ENCODE measurements at regions of chr1 and their contacts with region 1.

Region 1: DNA sequence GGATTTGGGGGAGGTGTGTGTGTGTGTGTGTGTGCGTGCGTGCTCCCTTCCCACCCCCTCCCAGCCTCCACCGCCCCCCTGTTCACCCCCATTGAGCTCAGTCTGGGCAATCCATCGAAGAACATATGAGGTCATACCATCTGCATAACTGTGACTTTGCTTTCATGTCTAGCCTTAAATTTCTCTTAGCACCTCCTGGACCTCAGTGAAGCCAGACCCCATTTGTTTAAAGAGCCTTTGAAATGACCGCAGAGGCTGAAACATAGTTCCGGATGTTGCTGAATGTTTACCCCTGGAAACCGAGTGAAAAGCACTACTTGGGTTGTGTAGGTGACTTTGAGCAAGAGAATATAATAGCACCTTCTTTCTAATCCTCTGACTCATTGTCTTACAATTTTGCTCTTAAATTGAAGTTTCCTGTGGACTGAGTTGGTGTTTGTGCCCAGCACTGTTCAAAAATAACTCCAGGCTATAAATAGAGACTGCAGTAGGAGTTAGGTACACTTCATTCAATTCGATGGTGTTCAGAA is 75.4 kb downstream of the UBE4B start:
- DNase-seq: no peak
- H3K4me3 ChIP-seq: no peak overlapping the region
- H3K27ac ChIP-seq: peak overlapping the region; percentile 53 to 70
- H3K4me1 ChIP-seq: peaks cover 15% of the 10 kb centered on the region
- H3K27me3 ChIP-seq: no peaks in the 10 kb centered on the region
- CTCF ChIP-seq: no peak
- POLR2A ChIP-seq: no peak

Region 2: DNA sequence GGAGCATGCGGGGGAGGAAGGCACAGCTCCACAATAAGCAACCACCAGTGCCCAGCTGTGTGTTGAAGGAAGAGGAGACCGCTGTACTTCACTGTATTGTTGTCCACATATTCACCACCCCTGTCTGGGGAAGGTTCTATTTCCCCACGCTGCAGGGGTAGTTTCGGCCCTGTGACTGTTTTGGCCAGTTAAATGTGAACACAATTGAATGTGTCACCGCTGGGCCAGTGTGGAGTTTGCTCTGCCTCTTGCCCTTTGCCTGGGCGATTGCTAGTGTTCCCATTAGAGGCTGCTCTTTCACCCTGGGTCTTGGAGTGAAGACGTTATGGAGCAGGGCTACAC is 42.9 kb before region 1 on chr1:
- intact Hi-C with region 1: loop called (anchors 5 kb)
- DNase-seq: no peak
- H3K4me3 ChIP-seq: no peak overlapping the region
- H3K27ac ChIP-seq: no peak overlapping the region
- H3K4me1 ChIP-seq: no peaks in the 10 kb centered on the region
- H3K27me3 ChIP-seq: no peaks in the 10 kb centered on the region
- CTCF ChIP-seq: no peak
- POLR2A ChIP-seq: no peak

Measured in prostate gland (tissue), 2 donors.